Activated CD4-positive, alpha-beta T cell treated with anti-CD3 and anti-CD28 coated beads for 36 hours (primary cell): ENCODE measurements at regions of chr3 and their contacts with region 1.

Region 1: DNA sequence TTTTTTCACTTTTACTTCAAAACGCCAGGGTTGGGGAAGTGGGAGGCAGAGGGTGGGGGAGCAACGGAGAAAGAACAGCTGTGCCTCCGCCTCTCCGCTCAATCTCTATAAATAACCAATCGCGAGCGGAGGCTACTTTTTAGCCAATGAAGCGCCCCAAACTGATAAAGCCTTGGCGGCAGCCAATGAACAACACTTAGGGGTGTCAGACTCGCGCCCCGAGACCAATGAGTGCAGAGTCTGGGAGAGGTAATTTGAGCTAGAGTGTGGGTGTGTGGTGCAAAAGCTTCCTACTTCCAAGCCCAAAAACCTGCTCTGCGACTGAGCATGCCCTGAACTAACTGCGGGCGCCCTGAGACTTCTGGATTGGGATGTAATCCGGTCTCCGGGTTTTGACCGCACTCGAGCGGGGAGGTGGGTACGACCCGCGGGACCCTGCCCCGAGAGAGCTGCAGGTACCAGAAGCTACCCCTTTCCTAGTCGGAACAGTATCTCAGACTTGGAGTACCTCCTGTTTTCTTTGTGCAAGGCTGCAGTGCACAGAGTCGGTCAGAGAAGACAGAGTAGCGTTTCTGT is 800 bp upstream of the RAP2B start:
- DNase-seq: peak; percentile 94
- ATAC-seq: peak; percentile 83
- H3K4me3 Mint-ChIP-seq: peak overlapping the region; percentile 97
- H3K27ac Mint-ChIP-seq: peak overlapping the region; percentile 97
- H3K4me1 Mint-ChIP-seq: peaks cover 32% of the 10 kb centered on the region
- H3K27me3 Mint-ChIP-seq: no peaks in the 10 kb centered on the region

Region 2: DNA sequence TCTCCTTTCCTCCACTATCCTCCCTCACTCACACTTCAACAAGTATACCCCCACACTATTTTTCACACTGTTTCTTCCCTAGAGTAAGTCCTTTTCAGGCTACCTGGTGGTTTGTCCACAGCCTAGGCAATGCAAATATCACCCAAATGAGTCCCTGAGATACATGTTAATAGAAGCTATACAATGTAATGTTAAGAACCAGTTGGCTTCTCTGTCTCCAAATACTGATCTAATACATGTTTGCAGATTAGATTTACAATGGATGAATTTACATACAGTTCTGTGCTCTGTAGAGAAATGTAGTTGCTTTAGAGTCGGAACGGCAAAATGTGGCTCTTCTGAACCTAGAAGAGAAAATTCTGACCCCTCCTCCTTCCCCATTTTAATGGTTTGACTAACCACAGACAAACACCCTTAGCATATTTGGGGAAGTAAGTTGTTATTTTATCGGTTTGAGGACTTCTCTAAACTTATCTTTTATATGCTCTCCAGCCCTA is 956.1 kb before region 1 on chr3:
- CTCF ChIA-PET with region 1: no interaction called
- POLR2A ChIA-PET with region 1: no interaction called
- intact Hi-C with region 1: loop called in 1 of 2 experiments (anchors 10 kb)
- DNase-seq: no peak
- ATAC-seq: no peak
- H3K4me3 Mint-ChIP-seq: peak overlapping the region; percentile 70
- H3K27ac Mint-ChIP-seq: peak overlapping the region; percentile 92
- H3K4me1 Mint-ChIP-seq: peaks cover 65% of the 10 kb centered on the region
- H3K27me3 Mint-ChIP-seq: no peaks in the 10 kb centered on the region

Region 3: GRCh38 chr3:152843955-152844354 is 317.3 kb before region 1 on chr3:
- CTCF ChIA-PET with region 1: no interaction called
- POLR2A ChIA-PET with region 1: no interaction called
- intact Hi-C with region 1: no loop called
- DNase-seq: no peak
- ATAC-seq: no peak
- H3K4me3 Mint-ChIP-seq: no peak overlapping the region
- H3K27ac Mint-ChIP-seq: no peak overlapping the region
- H3K4me1 Mint-ChIP-seq: no peaks in the 10 kb centered on the region
- H3K27me3 Mint-ChIP-seq: peaks cover 8% of the 10 kb centered on the region

Region 4: GRCh38 chr3:153138276-153139210 is 22.7 kb before region 1 on chr3:
- CTCF ChIA-PET with region 1: interaction called, 3 read pairs
- POLR2A ChIA-PET with region 1: no interaction called
- intact Hi-C with region 1: loop called (anchors 1 kb)
- DNase-seq: peak; percentile 86
- ATAC-seq: peak; percentile 89
- H3K4me3 Mint-ChIP-seq: no peak overlapping the region
- H3K27ac Mint-ChIP-seq: peak overlapping the region; percentile 76
- H3K4me1 Mint-ChIP-seq: peaks cover 26% of the 10 kb centered on the region
- H3K27me3 Mint-ChIP-seq: peaks cover 3% of the 10 kb centered on the region

Region 5: GRCh38 chr3:153285194-153285641 is 124.0 kb after region 1 on chr3:
- CTCF ChIA-PET with region 1: interaction called, 5 read pairs
- POLR2A ChIA-PET with region 1: interaction called, 4 read pairs
- intact Hi-C with region 1: loop called (anchors 2 kb)
- DNase-seq: no peak
- ATAC-seq: no peak
- H3K4me3 Mint-ChIP-seq: no peak overlapping the region
- H3K27ac Mint-ChIP-seq: peak overlapping the region; percentile 16
- H3K4me1 Mint-ChIP-seq: peaks cover 43% of the 10 kb centered on the region
- H3K27me3 Mint-ChIP-seq: no peaks in the 10 kb centered on the region

Region 6: GRCh38 chr3:153443961-153444360 is 282.7 kb after region 1 on chr3:
- CTCF ChIA-PET with region 1: no interaction called
- POLR2A ChIA-PET with region 1: no interaction called
- intact Hi-C with region 1: loop called in 1 of 2 experiments (anchors 10 kb)
- DNase-seq: no peak
- ATAC-seq: no peak
- H3K4me3 Mint-ChIP-seq: no peak overlapping the region
- H3K27ac Mint-ChIP-seq: no peak overlapping the region
- H3K4me1 Mint-ChIP-seq: peaks cover 15% of the 10 kb centered on the region
- H3K27me3 Mint-ChIP-seq: no peaks in the 10 kb centered on the region

Region 7: DNA sequence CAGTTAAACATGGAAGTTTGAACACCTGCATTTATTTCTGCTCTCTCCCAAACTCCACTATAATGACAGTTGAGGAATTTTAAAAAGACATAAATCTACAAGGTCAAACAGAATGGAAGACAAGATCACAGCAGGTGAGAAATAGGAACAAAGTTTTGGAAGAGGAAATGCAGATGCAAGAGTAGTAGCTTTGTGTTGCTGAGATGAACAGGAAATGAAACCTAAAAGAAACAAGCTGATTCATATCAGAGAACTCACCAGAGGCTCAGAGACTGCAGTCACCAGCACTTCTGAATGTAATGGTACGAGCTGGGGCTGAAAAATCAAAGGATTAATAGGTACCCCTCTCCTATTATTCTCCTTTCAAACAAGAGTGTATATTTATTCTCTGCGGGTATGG is 460.7 kb after region 1 on chr3:
- CTCF ChIA-PET with region 1: interaction called, 3 read pairs
- POLR2A ChIA-PET with region 1: interaction called, 3 read pairs
- intact Hi-C with region 1: loop called (anchors 1 to 5 kb)
- DNase-seq: peak; percentile 27
- ATAC-seq: peak; percentile 63
- H3K4me3 Mint-ChIP-seq: peak overlapping the region; percentile 30
- H3K27ac Mint-ChIP-seq: peak overlapping the region; percentile 55
- H3K4me1 Mint-ChIP-seq: peaks cover 58% of the 10 kb centered on the region
- H3K27me3 Mint-ChIP-seq: no peaks in the 10 kb centered on the region

Region 8: GRCh38 chr3:153768561-153769469 is 607.6 kb after region 1 on chr3:
- CTCF ChIA-PET with region 1: interaction called, 3 read pairs
- POLR2A ChIA-PET with region 1: no interaction called
- intact Hi-C with region 1: loop called (anchors 2 kb)
- DNase-seq: peak; percentile 52
- ATAC-seq: peak; percentile 97
- H3K4me3 Mint-ChIP-seq: no peak overlapping the region
- H3K27ac Mint-ChIP-seq: no peak overlapping the region
- H3K4me1 Mint-ChIP-seq: no peaks in the 10 kb centered on the region
- H3K27me3 Mint-ChIP-seq: peaks cover 3% of the 10 kb centered on the region